ENCODE measurements at regions of chr4 and their contacts with region 1.

Region 1: DNA sequence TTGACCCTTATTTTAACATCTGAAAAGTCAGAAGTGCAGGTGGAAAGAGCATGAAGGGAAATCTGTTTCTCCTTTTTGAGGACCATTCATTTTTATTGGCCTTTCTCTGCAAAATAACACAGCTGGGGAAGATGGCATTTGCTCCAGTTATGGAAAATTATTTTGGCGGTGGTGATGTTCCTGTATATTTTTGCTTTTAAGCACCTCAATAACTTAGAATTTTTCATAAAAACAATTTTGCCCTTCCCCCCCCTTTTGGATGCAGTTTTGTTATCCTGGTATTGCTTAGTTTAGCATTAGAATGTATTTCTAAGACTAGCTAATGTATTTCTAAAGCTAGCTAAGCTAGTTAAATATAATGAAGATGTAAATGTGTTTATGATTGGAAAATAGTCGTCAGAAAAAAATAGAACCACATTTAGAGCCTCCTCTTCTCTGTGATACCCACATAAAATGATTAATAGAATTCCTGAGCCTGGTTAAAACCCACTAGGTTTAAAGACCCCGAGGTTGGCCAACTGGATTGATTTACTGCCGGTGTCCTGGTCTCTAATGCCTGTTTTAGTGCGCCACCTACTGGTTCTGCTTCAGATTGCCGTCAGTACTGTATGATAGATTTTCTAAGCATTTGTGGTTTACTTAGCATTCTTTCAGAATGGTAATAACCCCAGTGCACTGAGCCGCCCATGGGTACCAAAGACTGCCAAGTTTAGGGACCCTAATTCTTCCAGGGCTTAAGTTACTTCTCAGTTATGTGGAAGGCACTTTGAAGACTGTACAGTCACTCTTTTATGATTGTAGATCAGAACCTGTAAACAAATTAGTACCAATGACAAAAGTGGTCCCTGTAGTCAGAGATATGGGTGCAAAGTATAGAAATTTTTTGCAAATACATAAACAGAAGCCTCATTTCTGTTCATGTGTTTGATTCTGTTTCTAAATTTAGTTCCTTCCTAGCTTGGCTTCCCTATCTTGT is 11.4 kb downstream of the KLF3 start:
- DNase-seq: peak; percentile 77
- ATAC-seq: peak; percentile 13
- H3K4me3 ChIP-seq: peak overlapping the region in 2 of 3 experiments; percentile 26 to 57; a peak in 2 of 6 replicates
- H3K27ac ChIP-seq: peak overlapping the region; percentile 78
- H3K4me1 ChIP-seq: peaks cover 73% of the 10 kb centered on the region
- H3K27me3 ChIP-seq: no peaks in the 10 kb centered on the region
- CTCF ChIP-seq: peak; percentile 87
- EP300 ChIP-seq: no peak
- POLR2A ChIP-seq: no peak
- RAD21 ChIP-seq: peak; percentile 88

Region 2: DNA sequence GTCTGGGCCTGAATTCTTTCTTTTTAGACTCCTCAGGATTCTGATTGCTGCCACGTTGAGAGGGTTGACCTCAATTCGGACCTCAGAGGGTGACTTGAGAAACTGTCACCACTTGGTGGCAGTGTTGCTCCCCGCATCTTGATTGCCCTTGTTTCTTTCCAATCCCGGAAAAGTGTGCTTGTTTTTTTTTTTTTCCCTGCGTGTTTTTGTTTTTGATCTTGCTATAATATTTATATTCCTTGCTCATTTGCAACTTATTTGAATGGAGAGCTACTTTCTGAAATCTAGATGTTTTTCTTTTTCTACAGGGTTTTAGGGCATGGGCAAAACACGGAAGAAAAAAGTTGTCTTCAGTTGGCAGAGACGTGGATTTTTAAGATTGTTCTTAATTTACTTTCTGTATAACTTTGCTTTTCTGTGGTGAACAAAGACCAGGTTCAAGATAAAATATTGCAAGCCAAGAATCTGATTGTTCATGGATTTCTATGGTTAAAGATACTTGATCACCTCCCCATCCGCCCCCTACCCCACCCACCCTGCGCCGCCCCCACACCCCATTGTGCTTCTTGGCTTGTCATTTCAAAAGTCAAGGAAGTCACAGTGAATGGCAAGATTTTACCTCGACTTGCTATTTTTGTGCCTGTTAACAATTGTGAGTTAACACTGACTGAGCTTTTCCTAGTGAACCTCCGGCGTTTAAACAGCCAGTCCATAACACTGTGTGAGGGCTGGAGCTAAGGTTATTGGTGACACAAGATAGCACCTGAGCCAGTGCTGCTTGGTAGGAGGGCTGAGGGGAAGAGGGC is 613.1 kb before region 1 on chr4:
- CTCF ChIA-PET with region 1: interaction called, 9 read pairs
- POLR2A ChIA-PET with region 1: no interaction called
- in situ Hi-C with region 1: no loop called
- intact Hi-C with region 1: loop called (anchors 1 kb)
- DNase-seq: peak; percentile 73
- ATAC-seq: peak; percentile 78
- H3K4me3 ChIP-seq: no peak overlapping the region
- H3K27ac ChIP-seq: peak overlapping the region; percentile 49
- H3K4me1 ChIP-seq: peaks cover 33% of the 10 kb centered on the region
- H3K27me3 ChIP-seq: no peaks in the 10 kb centered on the region
- CTCF ChIP-seq: peak; percentile 87
- EP300 ChIP-seq: peak in 1 of 2 experiments; percentile 26; a peak in 1 of 4 replicates
- POLR2A ChIP-seq: no peak
- RAD21 ChIP-seq: peak; percentile 78

Region 3: DNA sequence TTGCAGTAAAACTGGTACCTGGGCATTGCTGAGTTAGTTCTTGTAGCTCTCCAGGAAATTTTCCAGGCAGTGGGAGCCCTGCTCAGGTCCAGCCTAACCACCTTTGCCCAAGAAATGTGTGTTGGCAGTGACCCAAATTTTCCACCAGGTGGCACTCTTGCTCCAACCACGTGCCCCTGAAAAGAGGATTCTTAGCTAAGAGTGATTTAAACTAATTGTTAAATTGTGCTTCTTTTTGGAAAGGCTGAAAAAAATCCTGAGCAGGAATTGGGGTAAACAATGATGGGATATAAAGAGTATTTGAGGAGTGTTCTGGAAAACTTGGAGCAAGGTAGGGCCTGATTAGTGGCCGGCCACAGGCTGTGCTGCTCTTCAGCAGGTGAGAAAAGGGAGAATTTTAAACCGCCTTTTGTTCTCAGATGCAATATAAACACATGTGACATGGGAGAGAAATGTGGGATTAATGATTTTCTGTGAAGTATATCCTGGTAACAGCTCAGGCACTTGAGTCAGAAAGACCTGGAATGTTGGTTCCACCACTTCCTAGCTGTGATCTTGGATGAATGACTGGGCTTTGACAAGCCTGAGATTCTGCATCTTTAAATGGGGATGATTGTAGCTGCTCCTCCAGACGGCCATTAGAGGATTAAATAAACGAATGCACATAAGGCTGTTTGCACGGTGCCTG is 495.6 kb before region 1 on chr4:
- CTCF ChIA-PET with region 1: interaction called, 32 read pairs
- POLR2A ChIA-PET with region 1: interaction called, 9 read pairs
- in situ Hi-C with region 1: loop called (anchors 5 kb)
- intact Hi-C with region 1: loop called (anchors 1 kb)
- DNase-seq: peak; percentile 65
- ATAC-seq: peak; percentile 88
- H3K4me3 ChIP-seq: no peak overlapping the region
- H3K27ac ChIP-seq: no peak overlapping the region
- H3K4me1 ChIP-seq: peaks cover 51% of the 10 kb centered on the region
- H3K27me3 ChIP-seq: no peaks in the 10 kb centered on the region
- CTCF ChIP-seq: peak; percentile 91
- EP300 ChIP-seq: peak in 1 of 2 experiments; percentile 45; a peak in 1 of 4 replicates
- POLR2A ChIP-seq: no peak
- RAD21 ChIP-seq: peak; percentile 95

Region 4: GRCh38 chr4:38387348-38387747 is 288.1 kb before region 1 on chr4:
- CTCF ChIA-PET with region 1: no interaction called
- POLR2A ChIA-PET with region 1: interaction called, 6 read pairs
- in situ Hi-C with region 1: no loop called
- intact Hi-C with region 1: loop called (anchors 5 kb)
- DNase-seq: peak; percentile 50
- ATAC-seq: no peak; the same call in 2 of the 3 replicates
- H3K4me3 ChIP-seq: no peak overlapping the region
- H3K27ac ChIP-seq: peak overlapping the region; percentile 96
- H3K4me1 ChIP-seq: peaks cover 70% of the 10 kb centered on the region
- H3K27me3 ChIP-seq: no peaks in the 10 kb centered on the region
- CTCF ChIP-seq: no peak
- EP300 ChIP-seq: no peak
- POLR2A ChIP-seq: no peak
- RAD21 ChIP-seq: no peak

Region 5: GRCh38 chr4:38489924-38490639 is 185.4 kb before region 1 on chr4:
- CTCF ChIA-PET with region 1: no interaction called
- POLR2A ChIA-PET with region 1: no interaction called
- in situ Hi-C with region 1: no loop called
- intact Hi-C with region 1: loop called (anchors 5 kb)
- DNase-seq: peak; percentile 28
- ATAC-seq: peak; percentile 39
- H3K4me3 ChIP-seq: no peak overlapping the region
- H3K27ac ChIP-seq: peak overlapping the region; percentile 70
- H3K4me1 ChIP-seq: peaks cover 57% of the 10 kb centered on the region
- H3K27me3 ChIP-seq: no peaks in the 10 kb centered on the region
- CTCF ChIP-seq: no peak
- EP300 ChIP-seq: no peak
- POLR2A ChIP-seq: no peak
- RAD21 ChIP-seq: no peak